Mammary epithelial cell (primary cell): ENCODE measurements at regions of chr11 and their contacts with region 1.

Region 1: DNA sequence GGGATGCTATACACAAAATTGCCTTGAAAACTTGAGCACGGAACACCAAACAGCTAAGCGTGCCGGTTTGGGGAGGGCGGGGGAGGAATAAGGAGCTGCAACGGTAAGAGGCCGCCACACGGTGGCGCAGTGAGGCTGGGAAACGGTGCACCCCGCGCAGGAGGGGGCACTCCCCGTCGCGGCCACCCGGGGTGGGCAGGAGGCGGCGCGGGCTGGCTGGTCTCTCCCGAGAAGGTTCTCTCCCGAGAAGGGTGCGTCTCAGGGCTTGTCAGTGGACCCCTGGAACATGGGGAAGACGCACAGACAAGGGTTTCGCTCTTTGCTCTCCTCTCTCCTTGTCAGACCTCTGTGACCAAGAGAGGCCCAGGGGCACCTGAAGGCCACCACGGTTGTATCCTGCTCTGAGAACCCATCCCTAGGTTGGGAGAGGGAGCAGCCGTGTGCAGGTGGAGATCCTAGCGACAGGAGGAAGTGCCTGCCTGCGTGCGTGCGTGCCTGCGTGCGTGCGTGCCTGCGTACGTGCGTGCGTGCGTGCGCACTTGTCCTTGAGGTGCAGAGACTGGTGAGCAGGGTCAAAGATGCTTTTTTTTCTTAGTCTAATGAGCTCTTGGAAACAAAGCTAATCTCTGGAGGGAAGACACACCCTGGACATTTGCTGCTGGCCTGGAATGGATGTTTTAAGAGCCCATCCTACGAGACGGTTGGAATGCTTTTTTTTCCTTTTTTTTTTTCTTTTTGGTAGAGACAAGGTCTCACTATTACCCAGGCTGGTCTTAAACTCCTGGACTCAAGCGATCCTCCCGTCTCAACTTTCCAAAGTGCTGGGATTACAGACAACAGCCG is 18.1 kb upstream of the JAM3 start:
- DNase-seq: peak; percentile 34
- H3K4me3 ChIP-seq: peak overlapping the region in 1 of 3 experiments; percentile 25
- H3K27ac ChIP-seq: no peak overlapping the region
- H3K4me1 ChIP-seq: no peaks in the 10 kb centered on the region
- H3K27me3 ChIP-seq: no peaks in the 10 kb centered on the region
- CTCF ChIP-seq: peak; percentile 77 to 90

Region 2: GRCh38 chr11:133927690-133928627 is 122.8 kb before region 1 on chr11:
- CTCF ChIA-PET with region 1: interaction called, 9 read pairs
- dilution Hi-C with region 1: no loop called
- in situ Hi-C with region 1: loop called (anchors 5 to 25 kb)
- intact Hi-C with region 1: loop called (anchors 1 kb)
- DNase-seq: peak; percentile 56
- H3K4me3 ChIP-seq: peak overlapping the region in 1 of 3 experiments; percentile 8
- H3K27ac ChIP-seq: no peak overlapping the region
- H3K4me1 ChIP-seq: peaks cover 14% of the 10 kb centered on the region
- H3K27me3 ChIP-seq: no peaks in the 10 kb centered on the region
- CTCF ChIP-seq: peak; percentile 95 to 98

Region 3: GRCh38 chr11:133956650-133957633 is 93.8 kb before region 1 on chr11 and contains the start of gene IGSF9B:
- CTCF ChIA-PET with region 1: no interaction called
- dilution Hi-C with region 1: loop called (anchors 5 kb)
- in situ Hi-C with region 1: loop called in 1 of 2 experiments (anchors 10 kb)
- intact Hi-C with region 1: no loop called
- DNase-seq: peak; percentile 88
- H3K4me3 ChIP-seq: peak within 1 kb of the TSS; percentile 50 to 79 (median 66)
- H3K27ac ChIP-seq: no peak within 1 kb of the TSS
- H3K4me1 ChIP-seq: peaks cover 8% of the 10 kb centered on the region
- H3K27me3 ChIP-seq: peaks cover 13% of the 10 kb centered on the region
- CTCF ChIP-seq: no peak
- total RNA-seq, gene IGSF9B: 0.33 to 1.2 TPM

Region 4: GRCh38 chr11:133981156-133981555 is 69.6 kb before region 1 on chr11:
- CTCF ChIA-PET with region 1: no interaction called
- dilution Hi-C with region 1: loop called (anchors 5 kb)
- in situ Hi-C with region 1: no loop called
- intact Hi-C with region 1: no loop called
- DNase-seq: no peak
- H3K4me3 ChIP-seq: no peak overlapping the region
- H3K27ac ChIP-seq: no peak overlapping the region
- H3K4me1 ChIP-seq: no peaks in the 10 kb centered on the region
- H3K27me3 ChIP-seq: no peaks in the 10 kb centered on the region
- CTCF ChIP-seq: no peak

Region 5: DNA sequence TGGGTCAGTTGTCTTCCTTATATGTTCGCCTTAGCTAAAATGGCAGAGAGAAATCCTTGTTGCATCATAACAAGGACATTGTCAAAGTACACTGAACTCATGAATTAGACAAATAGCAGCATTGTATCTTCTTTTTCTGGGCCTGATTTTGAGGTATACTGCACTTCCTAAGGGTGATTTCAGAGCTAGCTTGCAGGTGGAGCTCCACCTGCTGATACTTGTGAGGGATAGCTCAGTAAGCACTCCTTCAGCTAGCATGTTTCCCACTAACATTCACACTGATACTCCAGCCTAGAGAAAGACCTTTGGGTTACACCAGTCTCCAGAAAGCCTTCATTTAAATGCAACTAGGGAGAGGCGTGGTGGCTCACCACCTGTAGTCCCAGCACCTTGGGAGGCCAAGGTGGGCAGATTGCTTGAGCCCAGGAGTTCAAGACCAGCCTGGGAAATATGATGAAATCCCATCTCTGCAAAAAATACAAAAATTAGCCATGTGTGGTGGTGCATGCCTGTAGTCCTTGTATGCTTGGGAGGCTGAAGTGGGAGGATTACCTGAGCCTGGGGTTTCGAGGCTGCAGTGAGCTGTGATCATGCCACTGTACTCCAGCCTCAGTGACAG is 47.9 kb after region 1 on chr11:
- CTCF ChIA-PET with region 1: no interaction called
- dilution Hi-C with region 1: no loop called
- in situ Hi-C with region 1: no loop called
- intact Hi-C with region 1: loop called (anchors 5 kb)
- DNase-seq: peak; percentile 11
- H3K4me3 ChIP-seq: no peak overlapping the region
- H3K27ac ChIP-seq: no peak overlapping the region
- H3K4me1 ChIP-seq: no peaks in the 10 kb centered on the region
- H3K27me3 ChIP-seq: no peaks in the 10 kb centered on the region
- CTCF ChIP-seq: peak in 1 of 2 donors; percentile 57

Region 6: DNA sequence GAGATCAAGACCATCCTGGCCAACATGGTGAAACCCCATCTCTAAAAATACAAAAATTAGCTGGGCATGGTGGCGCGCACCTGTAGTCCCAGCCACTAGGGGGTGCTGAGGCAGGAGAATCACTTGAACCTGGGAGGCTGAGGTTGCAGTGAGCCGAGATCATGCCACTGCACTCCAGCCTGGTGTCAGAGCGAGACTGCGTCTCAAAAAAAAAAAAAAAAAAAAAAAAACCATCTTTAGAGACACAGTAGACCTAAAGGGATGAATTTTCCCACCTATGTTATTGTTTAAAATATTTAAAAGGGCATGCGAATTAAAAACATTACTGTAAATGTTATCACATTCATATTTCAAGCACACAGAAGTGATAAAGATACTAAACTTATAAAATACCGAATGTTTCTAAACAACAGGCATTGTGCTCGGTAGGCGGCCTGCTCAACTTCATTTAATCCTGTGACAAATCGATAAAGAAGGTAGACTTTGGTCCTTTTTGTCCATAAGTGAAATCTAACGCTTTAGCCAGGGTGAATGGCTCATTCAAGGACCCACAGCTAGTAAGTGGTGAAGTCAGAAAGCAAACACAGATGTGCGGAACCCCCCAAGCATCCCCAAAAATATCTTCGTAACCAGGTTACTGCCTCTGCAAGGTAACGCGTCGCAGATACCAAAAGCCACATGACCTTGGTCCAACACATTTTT is 156.9 kb after region 1 on chr11:
- CTCF ChIA-PET with region 1: no interaction called
- dilution Hi-C with region 1: no loop called
- in situ Hi-C with region 1: no loop called
- intact Hi-C with region 1: no loop called
- DNase-seq: no peak
- H3K4me3 ChIP-seq: no peak overlapping the region
- H3K27ac ChIP-seq: no peak overlapping the region
- H3K4me1 ChIP-seq: no peaks in the 10 kb centered on the region
- H3K27me3 ChIP-seq: no peaks in the 10 kb centered on the region
- CTCF ChIP-seq: peak; percentile 31 to 55

Region 7: DNA sequence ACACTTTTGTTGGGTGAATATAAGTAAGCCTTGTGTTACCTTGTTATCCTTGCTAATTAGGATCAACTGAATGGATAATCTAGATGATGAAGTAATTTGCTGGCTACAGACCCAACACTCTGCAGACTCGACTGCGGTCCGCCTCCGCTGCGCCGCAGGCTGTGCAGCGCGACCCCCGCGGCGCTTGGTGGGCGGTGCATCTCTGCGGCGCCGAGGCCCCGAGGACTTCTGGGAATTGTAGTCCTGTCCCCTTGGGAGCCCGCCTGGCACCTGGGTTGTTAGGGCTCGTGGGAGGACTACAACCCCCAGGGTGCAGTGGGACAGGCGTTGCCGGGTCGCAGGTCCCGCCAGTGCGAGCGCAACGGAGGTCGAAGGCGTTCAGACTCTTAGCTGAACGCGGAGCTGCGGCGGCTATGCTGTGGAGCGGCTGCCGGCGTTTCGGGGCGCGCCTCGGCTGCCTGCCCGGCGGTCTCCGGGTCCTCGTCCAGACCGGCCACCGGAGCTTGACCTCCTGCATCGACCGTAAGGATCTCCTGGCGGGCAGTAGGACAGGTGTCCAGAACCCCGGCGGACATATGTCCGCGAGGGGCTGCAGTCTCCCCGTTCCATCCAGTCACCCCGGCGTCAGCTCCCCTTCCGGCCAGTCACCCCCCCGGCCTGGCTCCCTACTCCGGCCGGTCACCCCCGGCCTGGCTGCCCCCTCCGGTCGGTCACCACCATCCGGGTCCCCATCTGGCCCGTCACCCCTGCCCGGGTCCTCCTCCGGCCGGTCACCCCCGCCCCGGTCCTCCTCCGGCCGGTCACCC is 202.6 kb after region 1 on chr11 and contains the starts of genes ACAD8 and THYN1:
- CTCF ChIA-PET with region 1: no interaction called
- dilution Hi-C with region 1: no loop called
- in situ Hi-C with region 1: no loop called
- intact Hi-C with region 1: loop called (anchors 5 kb)
- DNase-seq: peak; percentile 92
- H3K4me3 ChIP-seq: peak within 1 kb of the TSS; percentile 87 to 94 (median 92)
- H3K27ac ChIP-seq: peak within 1 kb of the TSS; percentile 44
- H3K4me1 ChIP-seq: peaks cover 6% of the 10 kb centered on the region
- H3K27me3 ChIP-seq: no peaks in the 10 kb centered on the region
- CTCF ChIP-seq: peak in 1 of 2 donors; percentile 27
- total RNA-seq, gene ACAD8: 20.8 to 21.0 TPM
- total RNA-seq, gene THYN1: 30.2 to 38.0 TPM